Panc1 (cell line): ENCODE measurements at regions of chr2 and their contacts with region 1.

Region 1: DNA sequence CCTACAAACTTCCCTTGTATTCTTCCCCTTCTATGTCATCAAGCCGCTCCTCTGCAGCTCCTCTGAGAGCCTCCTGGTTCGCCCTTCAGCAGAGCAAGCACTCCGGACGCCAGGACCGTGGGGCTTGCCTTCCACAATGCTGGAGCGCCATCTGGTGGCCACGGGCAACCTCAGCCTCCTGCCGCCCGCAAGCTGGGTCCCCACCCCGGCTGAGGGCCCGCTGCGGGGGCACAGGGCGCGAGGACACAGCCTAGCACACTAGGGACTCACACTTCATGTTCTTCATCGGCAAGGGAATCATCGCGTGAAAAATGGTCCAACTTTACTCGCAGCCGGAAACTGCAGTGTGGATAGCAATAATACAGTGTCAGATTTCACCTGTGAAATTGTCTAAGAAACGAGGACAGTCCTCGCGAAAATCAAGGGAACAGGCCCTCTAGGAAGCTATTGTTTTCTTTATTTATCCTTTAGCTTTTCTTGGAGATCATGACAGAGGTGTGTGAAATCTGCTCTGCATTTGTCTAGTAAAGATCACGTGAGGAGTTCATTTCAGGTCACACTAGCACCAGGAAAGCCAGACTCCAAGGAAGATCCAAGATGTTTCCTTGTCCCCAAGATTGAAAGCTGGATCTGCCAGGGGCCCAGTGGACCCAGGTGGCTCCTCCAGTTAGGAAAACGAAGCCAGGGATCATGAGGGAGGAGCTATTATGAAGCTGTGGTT is 5.8 kb downstream of the PRLH start:
- DNase-seq: peak; percentile 64
- ATAC-seq: peak; percentile 98
- H3K4me3 ChIP-seq: peak overlapping the region in 1 of 2 experiments; percentile 41; a peak in 2 of 4 replicates
- H3K27ac ChIP-seq: peak overlapping the region; percentile 77
- H3K4me1 ChIP-seq: peaks cover 9% of the 10 kb centered on the region
- H3K27me3 ChIP-seq: no peaks in the 10 kb centered on the region
- CTCF ChIP-seq: peak; percentile 97

Region 2: GRCh38 chr2:237154082-237154638 is 418.0 kb before region 1 on chr2:
- CTCF ChIA-PET with region 1: no interaction called
- POLR2A ChIA-PET with region 1: no interaction called
- in situ Hi-C with region 1: no loop called
- intact Hi-C with region 1: loop called (anchors 5 kb)
- DNase-seq: no peak
- ATAC-seq: peak; percentile 74
- H3K4me3 ChIP-seq: no peak overlapping the region
- H3K27ac ChIP-seq: peak overlapping the region; percentile 55
- H3K4me1 ChIP-seq: no peaks in the 10 kb centered on the region; the same call in 1 of the 2 replicates
- H3K27me3 ChIP-seq: no peaks in the 10 kb centered on the region
- CTCF ChIP-seq: peak; percentile 90

Region 3: GRCh38 chr2:237512774-237513466 is 59.3 kb before region 1 on chr2:
- CTCF ChIA-PET with region 1: interaction called, 77 read pairs
- POLR2A ChIA-PET with region 1: no interaction called
- in situ Hi-C with region 1: no loop called
- intact Hi-C with region 1: loop called (anchors 2 kb)
- DNase-seq: peak; percentile 52
- ATAC-seq: peak; percentile 91
- H3K4me3 ChIP-seq: no peak overlapping the region
- H3K27ac ChIP-seq: peak overlapping the region; percentile 39; the same call in 1 of the 2 replicates
- H3K4me1 ChIP-seq: peaks cover 8% of the 10 kb centered on the region
- H3K27me3 ChIP-seq: no peaks in the 10 kb centered on the region
- CTCF ChIP-seq: peak; percentile 97